ENCODE measurements at regions of chr2 and their contacts with region 1.

Region 1: DNA sequence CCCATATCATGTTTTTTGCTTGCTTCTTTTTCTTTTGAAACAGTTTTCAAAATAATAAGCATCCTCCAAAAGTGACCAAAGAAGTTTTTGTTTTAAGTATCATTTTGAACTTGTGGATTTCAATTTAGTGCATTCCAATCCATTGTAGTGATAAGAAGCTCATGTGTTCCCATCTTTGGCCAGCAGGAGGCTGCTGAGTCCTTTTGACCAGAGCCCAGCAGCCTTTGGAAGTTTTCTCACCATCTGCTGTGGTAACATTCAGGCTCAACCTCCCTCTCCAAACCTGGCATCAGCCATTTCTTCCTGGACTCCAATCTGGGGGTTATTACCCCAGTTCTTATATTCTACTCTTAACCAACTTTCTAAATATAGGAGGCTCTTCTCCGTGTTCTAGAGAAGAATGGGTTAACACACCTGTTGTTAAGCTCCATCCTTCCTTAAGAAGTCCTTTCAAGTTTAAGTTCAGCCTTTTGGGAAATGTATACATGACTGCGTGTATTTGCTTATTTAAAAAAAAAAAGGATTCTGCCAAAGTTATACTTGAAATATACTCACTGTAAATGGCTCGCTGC is 39.0 kb upstream of the MAL start:
- DNase-seq: peak; percentile 54
- H3K4me3 Mint-ChIP-seq: no peak overlapping the region
- H3K27ac Mint-ChIP-seq: no peak overlapping the region
- H3K4me1 Mint-ChIP-seq: peaks cover 5% of the 10 kb centered on the region
- H3K27me3 Mint-ChIP-seq: peaks cover 19% of the 10 kb centered on the region

Region 2: DNA sequence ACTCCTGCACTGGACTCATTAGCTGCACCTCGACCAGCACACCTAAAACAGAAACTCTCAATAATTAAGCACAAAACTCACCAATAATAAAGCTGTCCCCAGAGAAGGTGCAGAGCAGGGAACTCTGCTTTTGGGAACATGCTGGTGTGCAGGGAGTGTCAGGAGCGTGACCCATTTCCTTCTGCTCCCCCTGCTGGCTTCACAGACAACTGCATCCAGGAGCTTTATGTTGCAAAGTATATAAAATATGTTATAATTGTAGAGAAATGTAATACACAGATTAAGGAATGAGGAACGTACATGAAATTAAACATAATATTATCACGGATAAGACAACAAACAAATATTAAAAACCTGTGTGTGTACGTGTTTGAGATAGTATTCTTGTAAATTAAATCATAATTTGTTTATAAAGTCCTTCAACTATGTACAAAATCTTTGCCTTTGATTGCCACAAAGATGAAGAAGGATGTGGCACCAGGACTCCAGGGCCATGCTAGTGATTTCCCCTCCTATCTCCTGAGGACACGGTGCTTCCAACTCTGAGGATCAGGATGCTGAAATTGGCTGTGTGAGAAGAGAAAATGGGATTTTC is 29.6 kb before region 1 on chr2:
- CTCF ChIA-PET with region 1: interaction called, 11 read pairs
- POLR2A ChIA-PET with region 1: no interaction called
- DNase-seq: peak; percentile 38
- H3K4me3 Mint-ChIP-seq: no peak overlapping the region
- H3K27ac Mint-ChIP-seq: no peak overlapping the region
- H3K4me1 Mint-ChIP-seq: no peaks in the 10 kb centered on the region
- H3K27me3 Mint-ChIP-seq: peaks cover 37% of the 10 kb centered on the region

Region 3: GRCh38 chr2:94996305-94997100 is 10.0 kb after region 1 on chr2:
- CTCF ChIA-PET with region 1: interaction called, 15 read pairs
- POLR2A ChIA-PET with region 1: no interaction called
- DNase-seq: no peak
- H3K4me3 Mint-ChIP-seq: no peak overlapping the region
- H3K27ac Mint-ChIP-seq: no peak overlapping the region
- H3K4me1 Mint-ChIP-seq: no peaks in the 10 kb centered on the region
- H3K27me3 Mint-ChIP-seq: peaks cover 20% of the 10 kb centered on the region

Region 4: GRCh38 chr2:95043300-95044093 is 57.0 kb after region 1 on chr2:
- CTCF ChIA-PET with region 1: no interaction called
- POLR2A ChIA-PET with region 1: no interaction called
- DNase-seq: no peak
- H3K4me3 Mint-ChIP-seq: no peak overlapping the region
- H3K27ac Mint-ChIP-seq: peak overlapping the region; percentile 41
- H3K4me1 Mint-ChIP-seq: peaks cover 60% of the 10 kb centered on the region
- H3K27me3 Mint-ChIP-seq: no peaks in the 10 kb centered on the region

Region 5: DNA sequence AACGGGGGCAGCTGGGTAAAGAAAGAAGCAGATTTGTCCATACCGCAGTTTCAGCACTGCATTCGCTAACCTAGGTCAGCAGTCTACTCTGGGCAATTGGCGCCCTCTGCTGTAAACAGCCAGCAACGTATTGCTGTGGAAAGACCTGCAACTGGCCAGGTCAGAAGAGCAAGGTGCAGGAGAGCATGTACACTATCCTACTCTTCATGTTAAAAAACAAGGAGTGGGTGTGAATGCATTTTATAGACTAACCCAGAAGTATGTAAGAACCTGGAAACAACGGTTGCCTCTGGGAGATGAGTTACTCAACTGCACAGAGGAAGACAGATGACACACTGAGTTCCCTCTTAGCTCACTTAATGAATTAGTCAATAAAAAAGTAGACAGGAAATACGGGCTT is 128.9 kb after region 1 on chr2:
- CTCF ChIA-PET with region 1: interaction called, 22 read pairs
- POLR2A ChIA-PET with region 1: interaction called, 3 read pairs
- DNase-seq: peak; percentile 81
- H3K4me3 Mint-ChIP-seq: no peak overlapping the region
- H3K27ac Mint-ChIP-seq: peak overlapping the region; percentile 18
- H3K4me1 Mint-ChIP-seq: peaks cover 42% of the 10 kb centered on the region
- H3K27me3 Mint-ChIP-seq: no peaks in the 10 kb centered on the region

Region 6: DNA sequence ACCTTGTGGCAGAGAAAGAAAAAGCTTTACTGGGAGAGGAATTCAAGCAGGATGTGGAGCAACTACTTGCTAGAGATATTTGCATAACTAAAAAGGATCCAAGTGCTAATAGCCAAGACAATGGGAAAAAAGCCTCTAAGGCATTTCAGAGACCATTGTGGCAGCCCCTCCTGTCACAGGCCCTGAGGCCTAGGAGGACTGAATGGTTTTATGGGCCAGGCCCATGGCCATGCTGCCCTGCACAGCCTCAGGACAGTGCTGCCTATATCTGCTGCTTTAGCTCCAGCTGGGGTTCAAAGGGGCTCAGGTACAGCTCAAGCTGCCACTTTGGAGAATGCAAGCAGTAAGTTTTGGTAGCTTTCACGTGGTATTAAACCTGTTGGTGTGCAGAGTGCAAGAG is 152.2 kb after region 1 on chr2:
- CTCF ChIA-PET with region 1: no interaction called
- POLR2A ChIA-PET with region 1: no interaction called
- DNase-seq: no peak
- H3K4me3 Mint-ChIP-seq: no peak overlapping the region
- H3K27ac Mint-ChIP-seq: no peak overlapping the region
- H3K4me1 Mint-ChIP-seq: no peaks in the 10 kb centered on the region
- H3K27me3 Mint-ChIP-seq: no peaks in the 10 kb centered on the region

Region 7: DNA sequence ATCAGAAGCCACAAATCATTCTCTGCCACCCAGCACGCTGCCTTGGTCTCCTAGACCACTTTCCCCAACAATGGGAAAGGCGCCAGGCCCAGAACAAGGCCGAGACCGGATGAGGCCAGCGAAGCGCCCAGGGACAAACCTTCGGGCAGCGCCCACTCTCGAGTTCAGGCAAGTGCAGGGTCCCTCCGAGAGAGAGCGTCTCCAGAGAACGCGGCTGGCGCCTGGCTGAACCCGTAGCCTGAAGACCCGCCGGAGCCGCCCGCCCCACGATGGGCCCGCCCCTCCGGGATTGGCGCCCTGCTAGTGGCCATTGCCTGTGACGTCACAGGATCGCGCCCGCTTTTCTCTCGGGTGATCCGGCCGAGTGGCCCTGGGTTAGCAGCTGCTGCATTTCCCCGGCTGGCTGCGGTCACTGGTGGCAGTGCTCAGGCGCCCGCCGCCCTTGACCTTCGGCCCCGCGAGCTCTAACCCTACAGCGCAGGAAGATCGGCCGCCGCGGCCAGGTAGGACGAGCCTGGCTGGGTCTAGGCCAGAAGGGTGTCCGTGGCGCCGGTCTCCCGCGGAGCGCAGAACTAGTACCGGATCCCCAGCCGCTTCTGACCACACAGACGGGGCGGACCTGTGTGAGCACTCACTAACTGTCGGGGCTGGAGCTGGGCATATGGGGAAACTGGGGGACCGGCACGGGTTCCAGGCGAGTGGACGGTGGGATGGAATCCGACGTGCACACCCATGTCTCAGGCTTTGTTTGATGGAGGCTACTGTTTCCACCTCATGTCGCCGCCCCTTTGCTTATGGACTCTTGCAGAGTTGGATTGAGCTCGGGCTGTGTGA is 416.1 kb after region 1 on chr2 and contains the start of gene FAHD2A:
- CTCF ChIA-PET with region 1: no interaction called
- POLR2A ChIA-PET with region 1: no interaction called
- DNase-seq: peak; percentile 96
- H3K4me3 Mint-ChIP-seq: peak within 1 kb of the TSS; percentile 99
- H3K27ac Mint-ChIP-seq: peak within 1 kb of the TSS; percentile 89
- H3K4me1 Mint-ChIP-seq: peaks cover 23% of the 10 kb centered on the region
- H3K27me3 Mint-ChIP-seq: no peaks in the 10 kb centered on the region
- total RNA-seq, gene FAHD2A: 35.8 to 37.3 TPM

Measured in activated CD4-positive, alpha-beta memory T cell treated with anti-CD3 and anti-CD28 coated beads, Interleukin-2, amount 10 ng/mL, durations not matched to agents 7 days and 5 days (primary cell).